ENCODE measurements at regions of chr1 and their contacts with region 1.

Region 1: GRCh38 chr1:153790966-153791647 is 15.9 kb downstream of the SLC27A3 start:
- DNase-seq: peak; percentile 62
- ATAC-seq: peak; percentile 62

Region 2: DNA sequence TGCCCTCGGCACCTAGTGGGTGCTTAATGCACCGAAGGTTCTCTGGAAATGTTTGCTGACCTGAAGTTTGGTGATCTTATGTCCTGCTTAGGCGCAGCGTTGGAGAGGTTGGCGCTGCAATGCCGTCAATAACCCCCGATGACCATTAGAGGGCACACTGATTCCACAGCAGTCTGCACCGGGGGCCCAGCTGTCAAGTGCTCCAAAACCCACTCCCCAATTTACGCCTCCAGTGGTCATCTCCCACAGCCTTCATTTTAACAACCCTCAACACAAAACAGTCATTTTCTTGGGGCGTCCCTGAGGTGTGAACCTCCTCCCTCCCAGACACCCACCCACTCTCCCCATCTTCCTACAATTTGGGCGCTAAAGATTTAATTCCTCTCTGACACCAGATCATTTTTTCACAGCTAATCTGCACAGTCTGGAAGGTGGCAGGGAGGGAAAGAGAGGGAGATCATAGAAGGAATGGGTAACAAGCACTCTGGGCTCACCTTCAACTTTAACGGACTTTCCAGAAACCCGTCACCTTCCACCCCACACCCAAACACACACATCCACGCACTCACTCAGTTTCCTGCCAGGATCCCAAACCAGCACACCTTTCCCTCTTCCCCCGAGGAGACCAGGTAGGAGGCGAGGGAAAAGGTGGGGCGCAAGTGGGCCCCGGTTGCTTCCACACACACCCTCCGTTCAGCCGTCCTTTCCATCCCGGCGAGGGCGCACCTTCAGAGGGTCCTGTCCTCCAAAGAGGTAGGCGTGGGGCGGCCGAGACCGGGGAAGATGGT is 113.2 kb before region 1 on chr1:
- intact Hi-C with region 1: no loop called
- DNase-seq: no peak
- ATAC-seq: peak; percentile 80

Region 3: GRCh38 chr1:153984123-153984894 is 193.2 kb after region 1 on chr1:
- intact Hi-C with region 1: loop called (anchors 5 kb)
- DNase-seq: no peak
- ATAC-seq: no peak

Measured in sciatic nerve (tissue), 2 donors.